ENCODE measurements at regions of chr6 and their contacts with region 1.

Region 1: DNA sequence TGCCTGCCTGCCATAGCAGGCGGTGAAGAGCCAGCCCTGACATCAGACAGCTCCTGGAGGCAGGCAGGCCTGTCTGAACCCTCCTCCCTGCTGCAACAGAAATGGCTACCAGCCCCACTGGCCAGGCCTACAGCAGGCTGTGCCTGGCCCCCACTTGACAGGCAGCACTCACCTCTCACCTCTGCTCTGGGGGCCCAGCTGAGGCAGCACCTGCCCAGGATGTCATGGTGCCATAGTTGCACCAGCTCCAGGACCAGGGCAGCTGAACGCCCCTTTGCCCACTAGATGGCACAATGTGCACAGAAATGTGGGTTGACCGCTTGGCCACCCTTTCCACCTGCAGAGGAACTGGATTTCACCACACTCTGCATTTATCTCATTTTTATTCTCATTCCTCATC is 30.6 kb downstream of the MRPL14 start:
- DNase-seq: peak; percentile 68 to 79 (median 74)
- ATAC-seq: peak; percentile 50 to 83 (median 76)
- H3K4me3 ChIP-seq: no peak overlapping the region
- H3K27ac ChIP-seq: no peak overlapping the region
- H3K4me1 ChIP-seq: peaks cover 0 to 10% (median 0%) of the 10 kb centered on the region in 12 donors
- H3K27me3 ChIP-seq: no peaks in the 10 kb centered on the region
- CTCF ChIP-seq: peak; percentile 72 to 86 (median 79)
- POLR2A ChIP-seq: no peak

Region 2: DNA sequence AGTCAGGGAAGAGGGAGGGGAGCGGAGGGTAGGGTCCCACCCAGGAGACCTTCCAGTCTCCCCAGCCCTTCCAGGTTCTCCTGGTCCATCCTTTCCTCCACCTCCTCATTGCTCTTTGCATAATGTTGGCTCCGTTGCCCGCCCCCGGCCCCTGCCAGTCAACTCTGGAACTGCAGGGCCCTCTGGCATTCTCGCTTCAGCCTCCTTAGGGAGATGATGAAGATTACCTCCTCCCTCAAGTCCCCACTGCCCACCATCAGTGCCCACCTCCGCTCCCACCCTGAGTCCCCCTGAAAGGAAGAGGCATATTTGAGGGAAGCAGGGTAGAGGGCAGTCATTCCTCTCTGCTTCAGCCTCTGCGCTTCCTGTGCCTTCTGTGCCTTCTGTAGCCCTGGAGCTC is 39.3 kb after region 1 on chr6:
- intact Hi-C with region 1: loop called in 1 of 10 experiments (anchors 5 kb)
- DNase-seq: no peak
- ATAC-seq: no peak
- H3K4me3 ChIP-seq: no peak overlapping the region
- H3K27ac ChIP-seq: no peak overlapping the region
- H3K4me1 ChIP-seq: peaks cover 0 to 19% (median 6%) of the 10 kb centered on the region in 12 donors
- H3K27me3 ChIP-seq: no peaks in the 10 kb centered on the region
- CTCF ChIP-seq: no peak
- POLR2A ChIP-seq: no peak

Region 3: DNA sequence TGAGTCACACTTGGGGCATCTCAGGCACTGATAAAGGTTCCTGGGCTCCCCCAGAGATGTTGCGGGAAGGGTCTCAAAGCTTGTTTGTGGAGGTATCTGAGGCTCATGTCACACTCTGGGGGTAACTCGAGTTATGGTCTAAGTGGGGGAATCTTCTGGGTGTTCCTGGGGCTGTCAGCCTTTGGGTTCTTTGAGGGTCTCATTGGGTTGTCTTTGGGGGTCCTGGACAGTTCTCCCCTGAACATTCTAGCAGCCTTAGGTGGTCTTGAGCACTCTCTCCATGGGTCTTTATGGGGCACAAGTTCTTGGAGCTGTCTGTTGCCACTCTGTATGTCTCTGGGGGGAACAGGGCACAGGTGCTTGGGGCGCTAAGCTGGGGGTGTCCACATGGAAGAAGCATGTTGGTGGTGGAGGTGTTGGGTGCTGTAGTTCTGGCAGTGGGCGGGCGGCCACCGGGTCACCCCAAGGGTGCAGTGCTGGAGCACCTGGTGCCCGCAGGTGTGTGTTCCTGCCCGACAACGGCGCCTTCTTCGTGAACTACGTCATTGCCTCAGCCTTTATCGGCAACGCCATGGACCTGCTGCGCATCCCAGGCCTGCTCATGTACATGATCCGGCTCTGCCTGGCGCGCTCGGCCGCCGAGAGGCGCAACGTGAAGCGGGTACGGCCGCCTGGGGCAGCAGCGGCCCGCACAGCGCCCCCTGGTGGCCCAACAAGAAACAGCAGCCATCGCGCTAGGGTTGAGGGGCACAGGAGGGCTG is 54.9 kb after region 1 on chr6:
- intact Hi-C with region 1: loop called (anchors 1 to 2 kb)
- DNase-seq: peak; percentile 61 to 89 (median 75)
- ATAC-seq: peak; percentile 30 to 80 (median 72)
- H3K4me3 ChIP-seq: no peak overlapping the region
- H3K27ac ChIP-seq: no peak overlapping the region
- H3K4me1 ChIP-seq: peaks cover 0 to 18% (median 6%) of the 10 kb centered on the region in 12 donors
- H3K27me3 ChIP-seq: no peaks in the 10 kb centered on the region
- CTCF ChIP-seq: peak; percentile 96 to 100 (median 99)
- POLR2A ChIP-seq: no peak

Region 4: DNA sequence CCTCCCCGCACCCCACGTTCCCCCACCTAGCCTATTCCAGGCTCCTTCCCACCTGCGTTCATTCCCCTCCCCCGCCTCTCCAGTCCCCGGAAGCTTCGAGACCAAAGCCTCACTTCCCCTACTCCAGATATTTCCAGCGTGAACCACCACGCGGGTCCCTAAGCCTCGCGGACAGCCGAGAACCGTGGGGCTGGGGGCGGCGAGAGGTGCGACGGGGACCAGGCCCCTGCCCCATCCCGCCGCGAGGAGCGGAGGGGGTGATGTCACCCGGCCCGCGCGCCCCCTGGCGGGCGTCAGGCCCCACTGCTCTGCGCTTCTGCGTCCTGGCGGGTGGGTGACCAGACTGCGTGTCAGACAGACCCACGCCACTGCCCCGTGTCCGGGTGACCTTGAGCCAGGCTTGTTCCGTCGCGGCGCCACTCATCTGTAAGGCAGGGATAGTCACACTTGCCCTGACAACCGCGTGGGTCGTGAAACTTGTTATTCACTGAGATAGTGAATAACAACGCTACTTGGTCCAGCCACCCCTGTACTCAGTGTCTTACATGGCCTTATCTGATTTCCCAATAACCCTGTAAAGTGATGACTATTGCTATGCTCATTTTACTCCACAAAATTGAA is 141.3 kb after region 1 on chr6:
- intact Hi-C with region 1: loop called in 7 of 10 experiments (anchors 5 to 10 kb)
- DNase-seq: peak; percentile 80 to 91 (median 83)
- ATAC-seq: peak; percentile 30 to 81 (median 74)
- H3K4me3 ChIP-seq: peak overlapping the region; percentile 32 to 75 (median 62)
- H3K27ac ChIP-seq: peak overlapping the region; percentile 87 to 99 (median 95)
- H3K4me1 ChIP-seq: peaks cover 3 to 52% (median 39%) of the 10 kb centered on the region in 12 donors
- H3K27me3 ChIP-seq: no peaks in the 10 kb centered on the region
- CTCF ChIP-seq: peak; percentile 95 to 100 (median 98)
- POLR2A ChIP-seq: peak in 1 of 2 donors; percentile 29

Region 5: GRCh38 chr6:44257025-44257752 is 160.6 kb after region 1 on chr6 and contains the start of gene SLC35B2:
- intact Hi-C with region 1: loop called in 3 of 10 experiments (anchors 5 to 10 kb)
- DNase-seq: peak; percentile 71 to 83 (median 75)
- ATAC-seq: peak; percentile 59 to 77 (median 75)
- H3K4me3 ChIP-seq: peak within 1 kb of the TSS; percentile 60 to 99 (median 88)
- H3K27ac ChIP-seq: peak within 1 kb of the TSS; percentile 75 to 97 (median 94)
- H3K4me1 ChIP-seq: peaks cover 3 to 50% (median 23%) of the 10 kb centered on the region in 12 donors
- H3K27me3 ChIP-seq: no peaks in the 10 kb centered on the region
- CTCF ChIP-seq: peak; percentile 48 to 94 (median 78)
- POLR2A ChIP-seq: peak in 1 of 2 donors; percentile 80
- total RNA-seq, gene SLC35B2: 18.1 to 35.6 (median 26.4) TPM

Region 6: GRCh38 chr6:44312901-44313788 is 216.5 kb after region 1 on chr6 and contains the start of gene AARS2:
- intact Hi-C with region 1: loop called in 1 of 10 experiments (anchors 10 kb)
- DNase-seq: peak; percentile 87 to 94 (median 89)
- ATAC-seq: peak; percentile 80 to 93 (median 92)
- H3K4me3 ChIP-seq: peak within 1 kb of the TSS; percentile 60 to 100 (median 96)
- H3K27ac ChIP-seq: peak within 1 kb of the TSS; percentile 56 to 91 (median 80)
- H3K4me1 ChIP-seq: peaks cover 0 to 36% (median 10%) of the 10 kb centered on the region in 12 donors
- H3K27me3 ChIP-seq: peaks cover 0 to 5% (median 0%) of the 10 kb centered on the region in 9 donors
- CTCF ChIP-seq: peak; percentile 93 to 100 (median 98)
- POLR2A ChIP-seq: peak in 1 of 2 donors; percentile 58
- total RNA-seq, gene AARS2: 5.0 to 9.8 (median 7.6) TPM

Region 7: DNA sequence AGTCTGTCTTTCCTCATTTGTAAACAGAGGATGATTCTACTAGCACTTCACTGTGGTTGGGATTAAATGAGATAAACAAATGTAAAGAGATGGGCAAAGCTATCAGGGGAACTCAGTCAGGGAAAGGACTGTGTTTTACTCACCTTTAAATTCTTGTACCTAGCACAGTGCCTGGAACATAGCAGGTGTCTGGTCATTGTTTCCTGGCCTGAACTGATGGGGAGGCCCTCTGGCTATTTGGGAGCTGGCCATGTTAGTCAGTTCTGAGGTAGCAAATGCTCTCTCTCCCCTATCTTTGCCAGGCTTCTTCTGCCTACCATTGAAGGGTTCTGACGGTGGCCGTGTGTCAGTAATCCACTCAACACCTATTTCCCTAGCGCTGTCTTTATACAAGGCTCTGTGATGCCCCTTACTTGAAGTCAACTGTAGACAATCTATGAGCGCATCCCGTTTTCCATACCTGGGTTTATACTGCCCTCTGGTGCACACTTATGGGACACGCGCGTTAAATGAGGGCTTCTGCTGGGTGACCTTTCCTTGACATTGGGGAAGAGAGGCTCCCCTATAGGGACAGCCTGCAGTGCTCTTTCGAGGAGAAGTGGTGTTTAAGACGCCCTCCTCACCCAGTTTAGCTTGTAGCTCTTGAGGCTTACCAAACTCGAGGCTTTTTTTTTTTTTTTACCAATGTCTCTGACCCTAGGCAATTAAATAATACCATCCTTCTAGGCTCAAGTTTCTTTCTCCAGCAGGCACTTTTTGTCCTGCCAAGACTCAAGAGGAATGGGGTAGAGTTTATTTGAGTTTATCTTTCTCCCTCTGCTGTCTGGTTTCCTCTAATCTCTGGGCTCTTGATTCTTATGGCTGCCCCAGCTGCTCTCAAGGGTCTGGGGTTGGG is 241.9 kb after region 1 on chr6:
- intact Hi-C with region 1: loop called in 7 of 10 experiments (anchors 2 to 10 kb)
- DNase-seq: peak in 4 of 5 donors; percentile 44 to 58 (median 46)
- ATAC-seq: peak; percentile 57 to 83 (median 78)
- H3K4me3 ChIP-seq: no peak overlapping the region
- H3K27ac ChIP-seq: peak overlapping the region in 1 of 12 donors; percentile 42
- H3K4me1 ChIP-seq: peaks cover 0 to 12% (median 5%) of the 10 kb centered on the region in 12 donors
- H3K27me3 ChIP-seq: peaks cover 0 to 7% (median 0%) of the 10 kb centered on the region in 9 donors
- CTCF ChIP-seq: peak; percentile 51 to 79 (median 61)
- POLR2A ChIP-seq: no peak

Measured in heart left ventricle (tissue), 16 donors.